ENCODE measurements at regions of chr1 and their contacts with region 1.

Region 1: GRCh38 chr1:201709564-201710295 is 119.2 kb upstream of the IPO9 start:
- DNase-seq: peak; percentile 76
- ATAC-seq: peak; percentile 99
- H3K4me3 Mint-ChIP-seq: no peak overlapping the region
- H3K27ac Mint-ChIP-seq: no peak overlapping the region
- H3K4me1 Mint-ChIP-seq: no peaks in the 10 kb centered on the region
- H3K27me3 Mint-ChIP-seq: peaks cover 2% of the 10 kb centered on the region
- CTCF ChIP-seq: peak; percentile 82

Region 2: GRCh38 chr1:201673093-201673492 is 36.6 kb before region 1 on chr1:
- CTCF ChIA-PET with region 1: no interaction called
- POLR2A ChIA-PET with region 1: no interaction called
- intact Hi-C with region 1: no loop called
- DNase-seq: no peak
- ATAC-seq: no peak
- H3K4me3 Mint-ChIP-seq: no peak overlapping the region
- H3K27ac Mint-ChIP-seq: no peak overlapping the region
- H3K4me1 Mint-ChIP-seq: no peaks in the 10 kb centered on the region
- H3K27me3 Mint-ChIP-seq: peaks cover 1% of the 10 kb centered on the region
- CTCF ChIP-seq: no peak

Region 3: DNA sequence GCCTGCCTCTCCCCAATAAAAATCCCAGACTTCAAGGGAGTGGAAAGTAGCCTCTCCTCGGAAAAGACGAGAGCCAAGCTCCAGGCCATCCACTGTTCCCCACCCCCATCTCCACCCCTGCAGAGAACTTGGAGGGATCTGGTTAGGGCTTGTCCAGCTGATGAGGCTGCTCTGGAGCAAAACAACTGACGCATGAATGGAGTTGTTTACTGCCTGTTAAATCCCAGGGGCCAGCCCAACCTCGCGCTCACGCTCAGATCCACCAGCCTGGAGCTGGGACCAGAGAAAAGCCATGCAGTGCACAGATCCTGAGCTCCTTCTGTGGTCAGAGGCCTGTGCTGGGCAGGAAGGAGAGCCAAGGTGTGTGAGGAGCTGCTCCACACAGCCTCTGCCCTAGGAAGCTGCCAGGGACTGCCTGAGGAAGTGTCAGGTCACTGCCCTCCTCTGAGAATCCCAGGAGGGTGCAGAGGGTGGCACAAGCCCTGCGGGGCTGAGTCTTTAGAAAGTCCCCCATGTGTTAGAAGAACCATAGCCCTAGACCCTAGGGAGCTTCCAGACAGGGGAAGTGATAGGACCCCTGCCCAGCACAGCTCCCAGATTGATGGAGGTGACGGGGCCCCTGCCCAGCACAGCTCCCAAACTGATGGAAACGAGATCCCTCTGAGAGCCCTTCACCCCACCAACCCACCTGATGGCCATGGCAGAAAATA is 10.2 kb after region 1 on chr1:
- CTCF ChIA-PET with region 1: interaction called, 22 read pairs
- POLR2A ChIA-PET with region 1: interaction called, 6 read pairs
- intact Hi-C with region 1: no loop called
- DNase-seq: no peak
- ATAC-seq: no peak
- H3K4me3 Mint-ChIP-seq: no peak overlapping the region
- H3K27ac Mint-ChIP-seq: no peak overlapping the region
- H3K4me1 Mint-ChIP-seq: no peaks in the 10 kb centered on the region
- H3K27me3 Mint-ChIP-seq: peaks cover 2% of the 10 kb centered on the region
- CTCF ChIP-seq: no peak

Region 4: GRCh38 chr1:201737352-201738060 is 27.8 kb after region 1 on chr1:
- CTCF ChIA-PET with region 1: interaction called, 10 read pairs
- POLR2A ChIA-PET with region 1: no interaction called
- intact Hi-C with region 1: no loop called
- DNase-seq: no peak
- ATAC-seq: no peak
- H3K4me3 Mint-ChIP-seq: no peak overlapping the region
- H3K27ac Mint-ChIP-seq: no peak overlapping the region
- H3K4me1 Mint-ChIP-seq: peaks cover 9% of the 10 kb centered on the region
- H3K27me3 Mint-ChIP-seq: peaks cover 22% of the 10 kb centered on the region
- CTCF ChIP-seq: no peak

Region 5: DNA sequence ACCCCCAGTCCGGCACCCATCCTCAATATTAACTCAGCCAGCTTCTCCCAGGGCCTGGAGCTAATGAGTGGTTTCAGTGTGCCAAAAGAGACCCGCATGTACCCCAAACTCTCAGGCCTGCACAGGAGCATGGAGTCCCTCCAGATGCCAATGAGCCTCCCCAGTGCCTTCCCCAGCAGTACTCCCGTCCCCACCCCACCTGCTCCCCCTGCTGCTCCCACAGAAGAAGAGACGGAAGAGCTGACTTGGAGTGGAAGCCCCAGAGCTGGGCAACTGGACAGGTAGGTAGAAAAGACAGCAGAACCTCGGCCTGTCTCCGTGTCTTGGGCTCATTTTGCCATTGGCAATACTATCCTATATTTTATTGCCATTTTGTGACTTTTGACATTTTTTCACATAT is 73.8 kb after region 1 on chr1:
- CTCF ChIA-PET with region 1: interaction called, 258 read pairs
- POLR2A ChIA-PET with region 1: no interaction called
- intact Hi-C with region 1: no loop called
- DNase-seq: no peak
- ATAC-seq: no peak
- H3K4me3 Mint-ChIP-seq: no peak overlapping the region
- H3K27ac Mint-ChIP-seq: no peak overlapping the region
- H3K4me1 Mint-ChIP-seq: no peaks in the 10 kb centered on the region
- H3K27me3 Mint-ChIP-seq: no peaks in the 10 kb centered on the region
- CTCF ChIP-seq: no peak